ENCODE measurements at regions of chr12 and their contacts with region 1.

Region 1: DNA sequence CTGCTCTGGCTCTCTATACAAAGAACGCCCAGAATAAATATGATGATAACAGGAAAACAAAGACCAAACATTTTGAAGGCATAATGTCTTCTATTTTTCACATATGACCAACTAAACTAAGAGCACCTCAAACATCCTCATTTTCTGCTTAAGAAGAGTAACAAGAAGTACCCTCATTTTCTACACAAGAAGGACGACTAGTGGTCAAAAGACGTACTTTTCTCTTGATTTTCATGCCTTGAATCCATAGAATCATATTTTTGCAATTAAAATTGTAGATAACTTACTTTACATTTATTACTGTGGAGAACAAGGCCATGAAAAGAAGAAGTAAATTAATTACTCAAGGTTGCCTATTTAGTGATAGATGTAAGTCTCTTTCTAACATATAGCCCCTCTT is 358.6 kb downstream of the DUSP6 start:
- DNase-seq: no peak
- H3K4me3 Mint-ChIP-seq: no peak overlapping the region
- H3K27ac Mint-ChIP-seq: no peak overlapping the region
- H3K4me1 Mint-ChIP-seq: no peaks in the 10 kb centered on the region
- H3K27me3 Mint-ChIP-seq: peaks cover 5% of the 10 kb centered on the region

Region 2: GRCh38 chr12:88111074-88111652 is 882.5 kb before region 1 on chr12:
- CTCF ChIA-PET with region 1: no interaction called
- intact Hi-C with region 1: loop called (anchors 5 kb)
- DNase-seq: no peak
- H3K4me3 Mint-ChIP-seq: no peak overlapping the region
- H3K27ac Mint-ChIP-seq: no peak overlapping the region
- H3K4me1 Mint-ChIP-seq: peaks cover 2% of the 10 kb centered on the region
- H3K27me3 Mint-ChIP-seq: no peaks in the 10 kb centered on the region

Region 3: GRCh38 chr12:88153959-88154358 is 839.7 kb before region 1 on chr12:
- CTCF ChIA-PET with region 1: no interaction called
- intact Hi-C with region 1: loop called (anchors 5 kb)
- DNase-seq: no peak
- H3K4me3 Mint-ChIP-seq: no peak overlapping the region
- H3K27ac Mint-ChIP-seq: no peak overlapping the region
- H3K4me1 Mint-ChIP-seq: peaks cover 24% of the 10 kb centered on the region
- H3K27me3 Mint-ChIP-seq: no peaks in the 10 kb centered on the region

Region 4: GRCh38 chr12:89059721-89060541 is 66.3 kb after region 1 on chr12:
- CTCF ChIA-PET with region 1: no interaction called
- intact Hi-C with region 1: no loop called
- DNase-seq: no peak
- H3K4me3 Mint-ChIP-seq: no peak overlapping the region
- H3K27ac Mint-ChIP-seq: no peak overlapping the region
- H3K4me1 Mint-ChIP-seq: peaks cover 9% of the 10 kb centered on the region
- H3K27me3 Mint-ChIP-seq: no peaks in the 10 kb centered on the region

Measured in activated naive CD4-positive, alpha-beta T cell treated with anti-CD3 and anti-CD28 coated beads for 36 hours (primary cell).